ENCODE measurements at regions of chr7 and their contacts with region 1.

Region 1: DNA sequence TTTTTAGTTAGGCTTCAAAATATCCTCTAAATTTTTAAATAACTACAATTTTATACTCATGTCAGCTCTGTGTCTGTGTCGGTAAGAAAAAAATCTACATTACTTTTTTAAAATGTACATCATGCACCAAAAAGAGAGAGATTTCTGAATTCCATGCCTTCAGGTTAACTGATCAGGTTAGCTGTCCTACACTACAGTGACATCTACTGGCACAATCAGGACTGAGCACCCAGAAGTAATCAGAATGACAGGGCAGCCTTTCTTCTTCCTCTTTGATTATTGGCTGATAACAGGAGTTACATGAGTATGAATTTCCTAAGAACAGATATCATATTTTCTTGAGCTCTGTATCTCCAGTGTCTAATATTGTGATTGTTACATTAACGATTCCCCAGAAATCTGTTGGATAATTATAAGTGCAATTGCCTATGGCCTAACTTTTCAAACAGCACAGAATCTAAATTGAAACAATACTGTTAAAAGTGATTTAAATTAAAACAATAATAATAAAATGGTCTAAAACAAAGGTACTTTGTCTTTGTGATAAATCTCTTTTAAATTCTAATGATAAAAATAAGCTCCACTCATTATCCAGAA is 41.8 kb upstream of the HYCC1 start:
- DNase-seq: peak in 13 of 14 experiments; percentile 17 to 83 (median 37)
- ATAC-seq: peak; percentile 99
- H3K4me3 ChIP-seq: no peak overlapping the region
- H3K4me3 Mint-ChIP-seq: no peak overlapping the region
- H3K27ac ChIP-seq: no peak overlapping the region
- H3K27ac Mint-ChIP-seq: no peak overlapping the region
- H3K4me1 ChIP-seq: no peaks in the 10 kb centered on the region
- H3K4me1 Mint-ChIP-seq: no peaks in the 10 kb centered on the region
- H3K27me3 ChIP-seq: no peaks in the 10 kb centered on the region
- H3K27me3 Mint-ChIP-seq: no peaks in the 10 kb centered on the region
- CTCF ChIP-seq: peak; percentile 96

Region 2: DNA sequence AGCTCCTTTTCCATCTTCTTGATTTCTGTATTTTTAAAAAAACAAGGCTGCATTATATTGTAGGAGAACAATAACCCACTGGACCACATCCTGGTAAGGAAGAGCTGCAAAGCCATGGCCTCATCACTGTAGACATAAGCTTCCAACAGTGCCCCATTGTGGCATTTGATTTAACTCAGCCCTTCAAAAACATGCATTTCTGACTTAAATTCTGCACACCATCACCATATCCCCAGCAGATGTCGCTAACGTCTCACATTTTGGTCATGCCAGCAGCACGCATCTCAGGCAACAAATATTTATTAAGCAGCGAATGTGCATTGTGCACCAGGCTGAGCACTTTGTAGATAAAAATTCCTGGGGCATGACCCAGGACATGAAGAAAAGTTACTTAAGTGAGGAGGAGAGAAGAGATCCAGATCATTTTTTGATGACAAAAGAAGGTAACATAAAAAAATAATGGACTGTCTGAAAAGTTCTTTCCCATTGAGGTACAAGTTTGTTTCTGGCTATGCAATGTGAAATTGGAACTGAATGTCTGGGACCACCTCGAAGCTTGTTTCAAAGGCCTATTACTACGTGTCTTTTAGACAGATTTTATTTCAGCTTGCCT is 945.3 kb before region 1 on chr7:
- CTCF ChIA-PET with region 1: no interaction called
- POLR2A ChIA-PET with region 1: no interaction called
- intact Hi-C with region 1: loop called in 1 of 2 experiments (anchors 5 kb)
- DNase-seq: peak; percentile 33 to 86 (median 50)
- ATAC-seq: peak; percentile 77
- H3K4me3 ChIP-seq: no peak overlapping the region
- H3K4me3 Mint-ChIP-seq: no peak overlapping the region
- H3K27ac ChIP-seq: no peak overlapping the region
- H3K27ac Mint-ChIP-seq: no peak overlapping the region
- H3K4me1 ChIP-seq: no peaks in the 10 kb centered on the region
- H3K4me1 Mint-ChIP-seq: no peaks in the 10 kb centered on the region
- H3K27me3 ChIP-seq: no peaks in the 10 kb centered on the region
- H3K27me3 Mint-ChIP-seq: peaks cover 5% of the 10 kb centered on the region
- CTCF ChIP-seq: peak; percentile 87

Region 3: GRCh38 chr7:22726345-22727185 is 329.1 kb before region 1 on chr7:
- CTCF ChIA-PET with region 1: interaction called, 3 read pairs
- POLR2A ChIA-PET with region 1: no interaction called
- intact Hi-C with region 1: loop called (anchors 5 kb)
- DNase-seq: peak; percentile 14 to 77 (median 29)
- ATAC-seq: peak; percentile 87
- H3K4me3 ChIP-seq: peak overlapping the region; percentile 7
- H3K4me3 Mint-ChIP-seq: peak overlapping the region; percentile 67
- H3K27ac ChIP-seq: no peak overlapping the region
- H3K27ac Mint-ChIP-seq: no peak overlapping the region
- H3K4me1 ChIP-seq: peaks cover 22% of the 10 kb centered on the region
- H3K4me1 Mint-ChIP-seq: peaks cover 18% of the 10 kb centered on the region
- H3K27me3 ChIP-seq: peaks cover 10 to 11% of the 10 kb centered on the region in 2 experiments
- H3K27me3 Mint-ChIP-seq: peaks cover 42% of the 10 kb centered on the region
- CTCF ChIP-seq: peak; percentile 68

Region 4: DNA sequence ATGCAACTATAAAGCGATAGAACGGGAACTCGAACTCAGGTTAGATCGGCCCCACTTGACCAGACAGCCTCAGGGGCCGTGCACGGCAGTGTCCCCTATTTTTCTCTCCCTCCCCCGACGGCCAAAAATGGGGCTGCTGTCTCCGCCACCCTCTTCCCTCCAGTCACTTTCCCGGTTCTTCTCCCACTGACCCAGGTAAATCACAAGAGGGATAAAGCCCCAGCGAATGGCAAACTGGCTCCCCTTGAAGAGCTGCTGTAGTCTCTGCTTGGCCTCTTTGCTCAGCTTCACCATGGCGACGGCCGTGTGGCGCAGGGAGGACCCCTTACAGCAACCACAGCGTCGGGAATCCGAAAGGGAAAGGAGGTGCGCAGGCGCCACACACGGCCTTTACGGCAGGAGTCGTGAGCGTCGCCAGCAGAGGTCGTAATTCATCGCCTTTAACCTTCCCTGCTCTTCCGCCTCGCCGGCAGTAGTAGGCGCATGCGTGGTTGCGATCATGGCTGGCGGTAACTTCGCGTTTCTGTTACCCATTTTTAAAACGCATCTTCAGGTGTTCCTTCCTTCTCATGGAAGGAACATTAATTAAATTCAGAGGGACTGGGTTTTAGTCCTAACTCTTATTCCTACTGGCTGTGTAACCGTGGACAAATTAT is 233.1 kb before region 1 on chr7 and contains the start of gene TOMM7:
- CTCF ChIA-PET with region 1: interaction called, 3 read pairs
- POLR2A ChIA-PET with region 1: no interaction called
- intact Hi-C with region 1: loop called in 1 of 2 experiments (anchors 2 kb)
- DNase-seq: peak; percentile 75 to 98 (median 84)
- ATAC-seq: peak; percentile 93
- H3K4me3 ChIP-seq: peak within 1 kb of the TSS; percentile 65
- H3K4me3 Mint-ChIP-seq: peak within 1 kb of the TSS; percentile 98
- H3K27ac ChIP-seq: peak within 1 kb of the TSS; percentile 46 to 66
- H3K27ac Mint-ChIP-seq: peak within 1 kb of the TSS; percentile 92
- H3K4me1 ChIP-seq: peaks cover 28% of the 10 kb centered on the region
- H3K4me1 Mint-ChIP-seq: peaks cover 49% of the 10 kb centered on the region
- H3K27me3 ChIP-seq: no peaks in the 10 kb centered on the region
- H3K27me3 Mint-ChIP-seq: peaks cover 15% of the 10 kb centered on the region
- CTCF ChIP-seq: no peak
- total RNA-seq, gene TOMM7: 503 to 549 TPM

Region 5: DNA sequence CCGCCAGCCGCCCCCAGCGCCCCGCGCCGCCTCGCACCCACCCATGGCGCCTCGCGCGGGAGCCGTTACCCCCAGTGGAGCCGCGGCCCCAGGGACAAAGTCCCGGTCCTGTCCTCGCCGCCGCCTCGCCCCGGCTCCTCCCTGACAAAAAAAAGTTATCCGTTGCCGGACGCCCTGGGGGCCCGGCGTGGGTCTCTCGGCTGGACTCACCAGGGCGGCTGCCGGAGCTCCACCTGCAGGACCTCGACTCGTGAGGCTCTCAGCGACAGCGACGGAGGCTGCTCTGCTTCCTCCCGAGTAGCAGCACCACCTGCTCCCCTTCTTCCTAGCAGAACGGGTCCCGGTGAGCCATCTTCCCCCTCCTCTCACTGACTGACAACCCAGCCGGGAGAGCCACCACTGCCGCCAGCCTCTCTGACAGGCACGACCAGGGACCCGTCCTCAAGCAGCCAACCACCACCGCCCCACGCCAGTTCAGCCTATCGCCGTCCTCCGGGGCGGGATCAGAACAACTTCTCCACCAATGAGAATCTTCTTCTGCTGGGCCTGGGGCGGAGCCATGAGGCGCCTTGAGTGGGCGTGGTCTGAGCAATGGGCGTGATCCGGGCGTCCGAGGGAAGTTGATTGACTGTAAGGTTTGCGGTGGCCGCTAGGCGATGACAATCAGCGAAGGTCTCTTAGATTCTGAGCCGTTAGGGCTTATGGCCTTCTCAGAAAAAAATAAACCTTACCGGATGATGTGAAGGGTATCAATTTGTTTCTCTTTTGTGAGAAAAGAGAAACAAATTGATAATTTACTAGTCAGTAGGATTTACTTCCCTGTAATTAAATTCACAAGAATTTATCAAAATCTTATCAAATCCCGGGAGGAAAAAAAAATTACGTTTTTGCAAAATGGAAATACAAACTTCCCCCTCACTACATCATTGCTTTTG is 41.7 kb before region 1 on chr7 and contains the start of gene HYCC1:
- CTCF ChIA-PET with region 1: interaction called, 6 read pairs
- POLR2A ChIA-PET with region 1: interaction called, 3 read pairs
- intact Hi-C with region 1: loop called in 1 of 2 experiments (anchors 2 kb)
- DNase-seq: peak; percentile 97 to 99 (median 98)
- ATAC-seq: peak; percentile 96
- H3K4me3 ChIP-seq: peak within 1 kb of the TSS; percentile 87
- H3K4me3 Mint-ChIP-seq: peak within 1 kb of the TSS; percentile 99
- H3K27ac ChIP-seq: peak within 1 kb of the TSS; percentile 31 to 44
- H3K27ac Mint-ChIP-seq: peak within 1 kb of the TSS; percentile 83
- H3K4me1 ChIP-seq: peaks cover 19% of the 10 kb centered on the region
- H3K4me1 Mint-ChIP-seq: peaks cover 24% of the 10 kb centered on the region
- H3K27me3 ChIP-seq: no peaks in the 10 kb centered on the region
- H3K27me3 Mint-ChIP-seq: no peaks in the 10 kb centered on the region
- CTCF ChIP-seq: peak; percentile 65
- total RNA-seq, gene HYCC1: 12.4 to 13.1 TPM